PC-3 (cell line): ENCODE measurements at regions of chr20 and their contacts with region 1.

Region 1: DNA sequence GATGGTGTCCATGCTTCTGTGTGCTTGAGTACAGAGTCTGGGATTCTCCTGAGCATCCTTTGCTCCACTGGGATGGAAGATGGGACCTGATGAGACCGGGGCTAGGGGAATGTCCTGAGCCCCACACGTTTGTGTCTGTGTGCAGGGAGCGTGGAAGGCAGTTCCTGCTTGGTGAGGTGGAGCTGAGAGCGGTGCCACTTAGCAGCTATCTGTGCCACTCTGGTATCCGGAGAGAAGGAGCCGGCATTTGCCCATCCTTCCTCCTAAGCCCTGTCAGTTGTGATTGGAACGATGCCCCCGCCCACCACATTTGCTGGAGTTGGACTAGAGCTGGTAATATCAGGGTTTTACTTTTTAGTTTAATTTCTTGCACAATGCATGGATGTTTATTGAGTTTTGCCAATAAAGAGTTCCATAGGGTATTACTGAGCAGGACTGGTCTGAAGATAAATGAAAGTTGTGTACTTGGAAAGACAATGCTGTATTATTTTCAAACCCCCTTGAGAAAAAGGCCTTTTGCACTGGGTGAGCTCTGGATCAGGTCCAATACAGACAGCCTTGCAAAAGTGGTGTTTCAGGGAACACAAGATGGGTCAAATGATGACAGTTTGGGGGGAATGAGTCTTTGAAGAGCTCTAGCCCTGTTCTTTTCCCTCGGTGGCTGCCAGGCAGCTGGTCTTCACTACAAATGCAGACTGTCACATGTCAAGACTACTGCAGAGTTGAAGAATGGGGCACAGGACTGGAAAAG is 130.8 kb downstream of the SYCP2 start:
- DNase-seq: no peak
- ATAC-seq: no peak
- H3K4me3 ChIP-seq: no peak overlapping the region
- H3K27ac ChIP-seq: no peak overlapping the region
- H3K4me1 ChIP-seq: peaks cover 5% of the 10 kb centered on the region
- H3K27me3 ChIP-seq: no peaks in the 10 kb centered on the region
- CTCF ChIP-seq: no peak

Region 2: GRCh38 chr20:59785986-59786795 is 16.5 kb before region 1 on chr20:
- CTCF ChIA-PET with region 1: no interaction called
- POLR2A ChIA-PET with region 1: no interaction called
- intact Hi-C with region 1: no loop called
- DNase-seq: peak; percentile 33
- ATAC-seq: peak; percentile 19; the same call in 1 of the 2 replicates
- H3K4me3 ChIP-seq: no peak overlapping the region
- H3K27ac ChIP-seq: no peak overlapping the region
- H3K4me1 ChIP-seq: peaks cover 13% of the 10 kb centered on the region; the same call in 1 of the 2 replicates
- H3K27me3 ChIP-seq: no peaks in the 10 kb centered on the region
- CTCF ChIP-seq: no peak

Region 3: GRCh38 chr20:59835448-59836395 is 33.1 kb after region 1 on chr20:
- CTCF ChIA-PET with region 1: no interaction called
- POLR2A ChIA-PET with region 1: no interaction called
- intact Hi-C with region 1: loop called (anchors 1 kb)
- DNase-seq: peak; percentile 91
- ATAC-seq: peak; percentile 64
- H3K4me3 ChIP-seq: peak overlapping the region; percentile 76
- H3K27ac ChIP-seq: peak overlapping the region; percentile 53
- H3K4me1 ChIP-seq: peaks cover 77% of the 10 kb centered on the region
- H3K27me3 ChIP-seq: no peaks in the 10 kb centered on the region
- CTCF ChIP-seq: no peak

Region 4: GRCh38 chr20:60310560-60311349 is 508.1 kb after region 1 on chr20:
- CTCF ChIA-PET with region 1: no interaction called
- POLR2A ChIA-PET with region 1: no interaction called
- intact Hi-C with region 1: no loop called
- DNase-seq: no peak
- ATAC-seq: no peak
- H3K4me3 ChIP-seq: no peak overlapping the region
- H3K27ac ChIP-seq: no peak overlapping the region
- H3K4me1 ChIP-seq: no peaks in the 10 kb centered on the region
- H3K27me3 ChIP-seq: no peaks in the 10 kb centered on the region
- CTCF ChIP-seq: no peak